Caco-2 (cell line): ENCODE measurements at regions of chr2 and their contacts with region 1.

Region 1: GRCh38 chr2:18435421-18436037 is 124.9 kb downstream of the RDH14 start:
- DNase-seq: peak in 1 of 2 experiments; percentile 58
- H3K4me3 ChIP-seq: no peak overlapping the region
- H3K4me3 Mint-ChIP-seq: no peak overlapping the region
- H3K27ac Mint-ChIP-seq: no peak overlapping the region
- H3K4me1 ChIP-seq: no peaks in the 10 kb centered on the region
- H3K4me1 Mint-ChIP-seq: no peaks in the 10 kb centered on the region
- H3K27me3 ChIP-seq: no peaks in the 10 kb centered on the region; the same call in 1 of the 2 replicates
- H3K27me3 Mint-ChIP-seq: peaks cover 14% of the 10 kb centered on the region
- CTCF ChIP-seq: peak; percentile 63 to 66

Region 2: DNA sequence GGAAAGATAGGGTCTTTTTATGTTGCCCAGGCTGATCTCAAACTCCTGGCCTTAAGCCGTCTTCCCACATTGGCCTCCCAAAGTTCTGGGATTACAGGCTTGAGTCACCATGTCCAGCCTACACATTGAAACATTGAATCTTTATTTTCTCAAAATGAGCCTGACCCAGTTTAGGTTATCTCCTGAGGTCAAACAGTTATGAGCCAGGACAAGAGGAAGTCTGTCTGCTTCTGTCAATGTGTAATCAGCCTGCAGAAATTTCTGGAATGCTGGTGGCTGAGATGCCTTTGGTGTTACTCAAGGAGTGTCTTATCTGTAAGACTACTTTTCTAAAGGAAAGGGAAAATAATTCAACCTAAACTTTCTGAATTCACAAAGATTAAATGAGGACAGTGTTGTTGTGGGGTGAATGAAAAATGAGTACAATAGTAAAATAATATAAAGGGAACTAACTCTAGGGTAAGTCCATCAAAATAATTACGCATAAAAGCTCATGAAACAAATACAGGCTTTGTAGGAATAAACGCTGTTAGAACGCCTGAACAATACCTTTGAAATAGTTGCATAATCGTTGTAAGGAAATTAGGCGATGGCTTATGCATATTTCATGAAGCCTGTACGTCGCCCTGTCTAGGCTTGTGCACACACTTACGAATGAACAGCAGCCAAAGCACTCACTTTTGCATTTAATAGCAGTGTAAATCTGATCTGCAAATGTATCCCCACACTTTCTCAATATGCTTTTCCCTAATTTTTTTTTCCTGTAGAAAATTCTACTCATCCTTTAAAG is 135.9 kb before region 1 on chr2:
- CTCF ChIA-PET with region 1: no interaction called
- POLR2A ChIA-PET with region 1: no interaction called
- intact Hi-C with region 1: no loop called
- DNase-seq: peak; percentile 85 to 91
- H3K4me3 ChIP-seq: 0 out of 2 replicates have a peak overlapping the region, but pooled peaks have one; percentile 9
- H3K4me3 Mint-ChIP-seq: peak overlapping the region; percentile 72
- H3K27ac Mint-ChIP-seq: peak overlapping the region; percentile 94
- H3K4me1 ChIP-seq: peaks cover 38% of the 10 kb centered on the region
- H3K4me1 Mint-ChIP-seq: peaks cover 18% of the 10 kb centered on the region
- H3K27me3 ChIP-seq: no peaks in the 10 kb centered on the region
- H3K27me3 Mint-ChIP-seq: no peaks in the 10 kb centered on the region
- CTCF ChIP-seq: no peak

Region 3: GRCh38 chr2:18319987-18320386 is 115.5 kb before region 1 on chr2:
- CTCF ChIA-PET with region 1: no interaction called
- POLR2A ChIA-PET with region 1: no interaction called
- intact Hi-C with region 1: no loop called
- DNase-seq: no peak
- H3K4me3 ChIP-seq: no peak overlapping the region
- H3K4me3 Mint-ChIP-seq: no peak overlapping the region
- H3K27ac Mint-ChIP-seq: peak overlapping the region; percentile 8
- H3K4me1 ChIP-seq: no peaks in the 10 kb centered on the region
- H3K4me1 Mint-ChIP-seq: peaks cover 15% of the 10 kb centered on the region
- H3K27me3 ChIP-seq: no peaks in the 10 kb centered on the region
- H3K27me3 Mint-ChIP-seq: no peaks in the 10 kb centered on the region
- CTCF ChIP-seq: no peak

Region 4: GRCh38 chr2:18455236-18455862 is 19.8 kb after region 1 on chr2:
- CTCF ChIA-PET with region 1: no interaction called
- POLR2A ChIA-PET with region 1: no interaction called
- intact Hi-C with region 1: loop called (anchors 1 kb)
- DNase-seq: peak in 1 of 2 experiments; percentile 40
- H3K4me3 ChIP-seq: no peak overlapping the region
- H3K4me3 Mint-ChIP-seq: no peak overlapping the region
- H3K27ac Mint-ChIP-seq: no peak overlapping the region
- H3K4me1 ChIP-seq: no peaks in the 10 kb centered on the region
- H3K4me1 Mint-ChIP-seq: no peaks in the 10 kb centered on the region
- H3K27me3 ChIP-seq: no peaks in the 10 kb centered on the region; the same call in 1 of the 2 replicates
- H3K27me3 Mint-ChIP-seq: peaks cover 12% of the 10 kb centered on the region
- CTCF ChIP-seq: peak; percentile 32 to 65

Region 5: DNA sequence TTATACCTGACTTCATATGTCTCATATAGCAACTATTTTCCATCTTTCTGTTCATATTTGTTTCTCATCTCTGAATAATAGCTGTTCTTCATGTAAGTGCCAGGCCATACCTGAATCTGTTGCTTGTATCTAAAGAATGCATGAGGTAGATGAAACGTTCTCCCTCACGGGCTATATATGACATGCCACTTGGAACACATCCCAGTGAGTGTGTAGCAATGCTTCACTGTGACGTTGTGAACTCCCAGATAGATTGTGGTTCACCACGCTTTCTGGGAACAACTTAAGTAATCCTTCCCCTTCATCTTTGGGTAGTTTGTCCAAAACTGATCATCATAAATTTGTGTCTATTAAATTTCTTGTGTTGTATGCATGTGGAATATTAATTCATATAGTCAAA is 64.8 kb after region 1 on chr2:
- CTCF ChIA-PET with region 1: no interaction called
- POLR2A ChIA-PET with region 1: no interaction called
- intact Hi-C with region 1: loop called (anchors 5 kb)
- DNase-seq: no peak
- H3K4me3 ChIP-seq: no peak overlapping the region
- H3K4me3 Mint-ChIP-seq: no peak overlapping the region
- H3K27ac Mint-ChIP-seq: no peak overlapping the region
- H3K4me1 ChIP-seq: peaks cover 11% of the 10 kb centered on the region
- H3K4me1 Mint-ChIP-seq: peaks cover 7% of the 10 kb centered on the region
- H3K27me3 ChIP-seq: no peaks in the 10 kb centered on the region
- H3K27me3 Mint-ChIP-seq: no peaks in the 10 kb centered on the region
- CTCF ChIP-seq: no peak

Region 6: GRCh38 chr2:18514526-18515461 is 79.3 kb after region 1 on chr2:
- CTCF ChIA-PET with region 1: no interaction called
- POLR2A ChIA-PET with region 1: no interaction called
- intact Hi-C with region 1: loop called (anchors 1 kb)
- DNase-seq: no peak
- H3K4me3 ChIP-seq: no peak overlapping the region
- H3K4me3 Mint-ChIP-seq: no peak overlapping the region
- H3K27ac Mint-ChIP-seq: no peak overlapping the region
- H3K4me1 ChIP-seq: no peaks in the 10 kb centered on the region
- H3K4me1 Mint-ChIP-seq: no peaks in the 10 kb centered on the region
- H3K27me3 ChIP-seq: no peaks in the 10 kb centered on the region
- H3K27me3 Mint-ChIP-seq: peaks cover 6% of the 10 kb centered on the region
- CTCF ChIP-seq: no peak

Region 7: DNA sequence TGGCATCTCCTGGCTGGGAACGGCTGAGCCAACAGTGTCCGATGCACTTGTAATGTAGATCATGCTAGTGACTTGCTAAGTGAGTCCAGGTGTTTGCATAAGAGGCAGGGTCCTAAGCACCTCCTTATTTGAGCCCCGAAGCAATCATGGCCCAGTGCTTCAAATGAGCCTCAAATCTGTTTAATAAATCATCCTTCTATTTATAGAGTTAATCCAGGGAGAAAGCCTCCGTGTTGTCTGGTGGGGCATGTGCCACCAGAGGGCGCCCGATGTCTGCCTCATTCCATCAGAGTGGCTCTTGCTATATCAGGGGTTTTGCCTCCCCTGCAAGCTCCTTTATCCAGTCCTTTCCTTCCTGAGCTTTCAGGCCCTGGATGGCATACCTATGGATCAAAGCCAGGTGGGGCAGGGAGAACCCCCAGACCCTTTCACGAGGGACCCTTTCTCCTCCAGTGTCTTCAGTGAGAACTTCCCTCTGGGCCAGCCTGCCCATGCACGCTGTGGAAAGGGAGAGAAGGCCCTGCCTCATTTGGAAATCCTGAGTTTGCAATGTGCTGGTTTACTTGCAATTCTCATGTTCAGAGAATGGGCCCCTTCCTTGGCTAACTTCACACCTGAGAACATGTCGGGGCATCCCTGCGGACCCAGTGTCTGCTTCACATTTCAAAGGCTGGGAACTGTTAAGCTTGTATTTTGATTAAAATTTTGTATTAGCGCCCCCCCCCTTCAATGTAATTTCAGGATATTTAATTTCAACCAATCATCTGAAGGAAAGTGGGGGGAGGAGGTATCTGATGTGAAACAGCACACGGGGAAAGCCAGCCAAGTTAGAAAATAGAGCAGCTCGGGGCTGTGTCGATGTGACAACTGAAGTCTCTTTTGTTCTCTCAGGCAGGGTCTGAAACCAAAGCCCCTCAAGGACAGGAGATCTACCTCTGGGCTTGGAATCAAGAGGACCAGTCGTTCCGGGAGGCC is 85.2 kb after region 1 on chr2:
- CTCF ChIA-PET with region 1: no interaction called
- POLR2A ChIA-PET with region 1: no interaction called
- intact Hi-C with region 1: loop called (anchors 1 kb)
- DNase-seq: peak; percentile 75 to 79
- H3K4me3 ChIP-seq: no peak overlapping the region
- H3K4me3 Mint-ChIP-seq: no peak overlapping the region
- H3K27ac Mint-ChIP-seq: no peak overlapping the region
- H3K4me1 ChIP-seq: 0 out of 2 replicates have a peak, but pooled peaks cover 4% of the 10 kb centered on the region
- H3K4me1 Mint-ChIP-seq: no peaks in the 10 kb centered on the region
- H3K27me3 ChIP-seq: no peaks in the 10 kb centered on the region
- H3K27me3 Mint-ChIP-seq: peaks cover 3% of the 10 kb centered on the region
- CTCF ChIP-seq: peak; percentile 93 to 96

Region 8: DNA sequence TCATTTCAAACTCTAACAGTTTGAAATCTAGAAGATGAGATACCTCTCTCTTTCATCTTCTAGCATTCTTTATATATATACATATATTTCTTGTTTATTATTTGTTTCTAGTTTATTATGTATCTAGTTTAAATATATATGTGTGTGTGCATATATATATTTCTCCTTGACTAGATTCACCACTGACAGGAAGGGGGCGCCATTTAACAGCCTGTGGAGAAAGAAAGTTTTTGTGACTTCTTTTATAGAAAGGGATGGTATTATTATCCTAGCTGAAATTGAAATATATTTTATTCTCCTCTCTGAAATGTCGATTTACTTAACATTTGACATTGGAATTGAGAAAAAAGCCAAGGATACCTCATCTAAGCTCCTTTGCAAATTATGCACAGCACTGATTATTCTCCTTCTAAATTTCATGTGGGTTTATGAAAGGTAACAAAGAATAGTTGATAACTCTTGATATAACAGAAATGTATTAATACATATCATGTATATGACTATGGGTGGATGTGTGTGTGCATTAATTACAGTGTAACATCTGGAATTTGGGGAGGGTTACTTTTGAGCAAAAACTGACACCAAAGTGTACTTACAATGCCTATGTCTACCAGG is 314.5 kb after region 1 on chr2:
- CTCF ChIA-PET with region 1: no interaction called
- POLR2A ChIA-PET with region 1: no interaction called
- intact Hi-C with region 1: loop called (anchors 1 kb)
- DNase-seq: peak in 1 of 2 experiments; percentile 69
- H3K4me3 ChIP-seq: no peak overlapping the region
- H3K4me3 Mint-ChIP-seq: no peak overlapping the region
- H3K27ac Mint-ChIP-seq: no peak overlapping the region
- H3K4me1 ChIP-seq: no peaks in the 10 kb centered on the region
- H3K4me1 Mint-ChIP-seq: no peaks in the 10 kb centered on the region
- H3K27me3 ChIP-seq: no peaks in the 10 kb centered on the region
- H3K27me3 Mint-ChIP-seq: peaks cover 8% of the 10 kb centered on the region
- CTCF ChIP-seq: peak; percentile 73 to 84

Region 9: DNA sequence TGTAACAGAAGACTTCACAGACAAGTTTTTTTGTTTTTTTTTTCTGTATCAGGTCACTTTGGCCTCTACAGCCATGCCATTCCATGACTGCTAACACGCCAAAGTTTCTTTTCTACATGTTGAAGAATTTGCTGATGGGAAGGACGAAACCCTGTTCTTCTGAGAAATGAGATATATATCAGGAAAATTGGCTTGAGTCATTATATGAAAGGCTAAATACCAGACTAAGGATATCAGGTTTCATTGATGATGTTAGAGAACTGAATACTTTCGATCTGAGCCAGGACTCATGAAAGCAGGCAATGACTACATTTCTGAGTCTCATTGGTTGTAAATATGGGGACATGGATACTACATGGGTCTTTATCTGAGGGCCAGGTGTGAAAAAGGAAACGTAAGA is 741.4 kb after region 1 on chr2:
- CTCF ChIA-PET with region 1: no interaction called
- POLR2A ChIA-PET with region 1: no interaction called
- intact Hi-C with region 1: no loop called
- DNase-seq: no peak
- H3K4me3 ChIP-seq: no peak overlapping the region
- H3K4me3 Mint-ChIP-seq: no peak overlapping the region
- H3K27ac Mint-ChIP-seq: no peak overlapping the region
- H3K4me1 ChIP-seq: no peaks in the 10 kb centered on the region
- H3K4me1 Mint-ChIP-seq: no peaks in the 10 kb centered on the region
- H3K27me3 ChIP-seq: no peaks in the 10 kb centered on the region
- H3K27me3 Mint-ChIP-seq: no peaks in the 10 kb centered on the region
- CTCF ChIP-seq: no peak